Right cardiac atrium (tissue), 5 donors: ENCODE measurements at regions of chr14 and their contacts with region 1.

Region 1: DNA sequence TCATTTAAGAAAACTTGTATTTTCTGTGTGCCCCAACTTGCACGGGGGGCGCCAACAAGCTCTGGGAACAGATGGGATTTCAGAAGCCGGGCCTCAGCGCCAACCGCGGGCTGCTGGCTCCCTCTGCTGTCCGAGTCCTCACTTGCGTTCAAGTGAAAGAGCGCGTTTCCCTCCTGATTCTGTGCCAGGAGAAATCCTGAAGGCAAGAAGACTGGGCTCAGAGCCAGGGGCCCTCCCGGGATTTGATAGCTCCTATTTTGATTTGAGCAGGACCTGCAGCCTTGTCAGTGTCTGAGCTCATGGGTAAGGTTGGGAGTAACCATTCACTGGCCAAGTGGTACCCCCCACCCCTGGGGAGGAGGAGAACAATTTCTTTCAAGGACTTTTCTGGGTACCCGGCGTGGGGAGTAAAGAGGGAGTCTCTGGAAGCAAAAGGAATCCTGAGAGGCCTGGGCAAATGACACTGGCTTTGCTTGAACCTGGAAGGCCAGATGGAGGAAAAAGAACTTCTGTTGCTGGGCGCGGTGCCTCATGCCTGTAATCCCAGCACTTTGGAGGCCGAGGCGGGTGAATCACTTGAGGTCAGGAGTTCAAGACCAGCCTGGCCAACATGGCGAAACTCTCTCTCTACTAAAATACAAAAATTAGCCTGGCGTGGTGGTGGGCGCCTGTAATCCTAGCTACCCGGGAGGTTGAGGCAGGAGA is 179.0 kb upstream of the RGS6 start:
- DNase-seq: peak; percentile 95 to 98 (median 95)
- ATAC-seq: peak; percentile 87 to 93
- H3K4me3 ChIP-seq: no peak overlapping the region
- H3K27ac ChIP-seq: no peak overlapping the region
- H3K4me1 ChIP-seq: no peaks in the 10 kb centered on the region
- H3K27me3 ChIP-seq: no peaks in the 10 kb centered on the region

Region 2: DNA sequence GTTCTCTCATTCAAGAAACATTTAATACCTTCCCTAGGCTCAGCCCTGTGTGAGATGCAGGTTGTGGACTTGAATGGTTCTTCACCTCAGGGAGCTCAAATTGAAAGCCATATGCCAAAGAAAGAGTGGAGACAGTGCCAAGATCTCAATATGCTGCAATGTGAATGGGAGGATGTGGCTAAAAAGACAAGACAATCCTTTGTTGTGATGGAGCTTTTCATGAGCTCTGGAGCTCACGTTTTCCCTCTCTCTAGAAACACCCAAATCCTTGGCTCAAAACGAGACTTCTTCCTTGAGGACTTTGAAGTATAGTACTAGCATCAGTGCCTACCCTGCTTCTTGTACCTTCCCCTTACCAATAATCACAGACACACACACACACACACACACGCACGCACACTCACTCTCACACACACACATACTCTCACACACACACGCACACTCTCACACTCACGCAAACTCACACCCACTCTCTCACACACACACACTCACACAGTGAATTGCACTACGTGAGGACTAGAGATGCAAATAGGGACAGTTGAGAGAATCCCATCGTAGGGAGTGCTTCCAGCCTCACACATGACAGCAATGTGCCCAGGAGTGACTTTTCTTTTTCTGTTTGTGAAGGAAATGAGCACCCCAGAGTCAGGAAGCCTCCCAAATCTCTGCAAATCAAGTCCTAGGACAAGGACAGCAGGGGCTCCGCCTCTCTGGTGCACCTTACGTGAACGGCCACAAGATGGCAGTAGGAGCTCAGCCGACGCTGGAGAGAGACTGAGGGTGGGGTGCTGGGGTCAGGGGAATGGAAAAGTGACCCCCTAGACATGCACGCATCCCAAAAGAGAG is 614.6 kb before region 1 on chr14:
- intact Hi-C with region 1: loop called (anchors 1 to 5 kb)
- DNase-seq: peak; percentile 37 to 73 (median 69)
- ATAC-seq: peak; percentile 81 to 86
- H3K4me3 ChIP-seq: no peak overlapping the region
- H3K27ac ChIP-seq: no peak overlapping the region
- H3K4me1 ChIP-seq: no peaks in the 10 kb centered on the region
- H3K27me3 ChIP-seq: no peaks in the 10 kb centered on the region

Region 3: GRCh38 chr14:71320107-71320733 is 433.1 kb before region 1 on chr14:
- intact Hi-C with region 1: loop called in 2 of 4 experiments (anchors 10 kb)
- DNase-seq: peak; percentile 99
- ATAC-seq: peak; percentile 98
- H3K4me3 ChIP-seq: peak within 1 kb of the TSS; percentile 96
- H3K27ac ChIP-seq: peak within 1 kb of the TSS; percentile 73
- H3K4me1 ChIP-seq: peaks cover 2% of the 10 kb centered on the region
- H3K27me3 ChIP-seq: no peaks in the 10 kb centered on the region